ENCODE measurements at regions of chr13 and their contacts with region 1.

Region 1: DNA sequence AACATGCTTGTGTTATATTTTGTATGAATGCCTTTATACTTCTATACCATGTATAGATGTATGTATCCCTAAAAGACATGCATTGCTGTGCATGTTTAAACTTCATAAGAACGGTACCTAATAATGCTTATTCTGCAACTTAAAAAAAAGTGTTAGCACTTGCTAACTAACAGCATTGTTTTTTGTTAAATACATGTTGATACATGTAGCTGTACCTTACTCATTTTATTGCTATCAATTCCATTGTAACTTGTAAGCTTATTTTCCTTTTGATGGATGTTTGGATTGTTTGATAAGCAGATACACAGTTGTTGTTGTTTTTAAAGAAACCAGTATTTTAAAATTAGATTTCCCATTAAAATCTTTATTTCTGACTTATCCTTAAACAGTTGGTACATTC is 53.8 kb downstream of the CDK8 start:
- DNase-seq: no peak
- H3K4me3 ChIP-seq: no peak overlapping the region
- CTCF ChIP-seq: no peak

Region 2: GRCh38 chr13:26219726-26220125 is 88.0 kb before region 1 on chr13:
- in situ Hi-C with region 1: loop called (anchors 5 kb)
- DNase-seq: no peak
- H3K4me3 ChIP-seq: no peak overlapping the region
- CTCF ChIP-seq: no peak

Region 3: GRCh38 chr13:26372747-26373146 is 65.0 kb after region 1 on chr13:
- in situ Hi-C with region 1: loop called (anchors 5 kb)
- DNase-seq: no peak
- H3K4me3 ChIP-seq: no peak overlapping the region
- CTCF ChIP-seq: no peak